CD4-positive, alpha-beta memory T cell (primary cell): ENCODE measurements at regions of chr18 and their contacts with region 1.

Region 1: DNA sequence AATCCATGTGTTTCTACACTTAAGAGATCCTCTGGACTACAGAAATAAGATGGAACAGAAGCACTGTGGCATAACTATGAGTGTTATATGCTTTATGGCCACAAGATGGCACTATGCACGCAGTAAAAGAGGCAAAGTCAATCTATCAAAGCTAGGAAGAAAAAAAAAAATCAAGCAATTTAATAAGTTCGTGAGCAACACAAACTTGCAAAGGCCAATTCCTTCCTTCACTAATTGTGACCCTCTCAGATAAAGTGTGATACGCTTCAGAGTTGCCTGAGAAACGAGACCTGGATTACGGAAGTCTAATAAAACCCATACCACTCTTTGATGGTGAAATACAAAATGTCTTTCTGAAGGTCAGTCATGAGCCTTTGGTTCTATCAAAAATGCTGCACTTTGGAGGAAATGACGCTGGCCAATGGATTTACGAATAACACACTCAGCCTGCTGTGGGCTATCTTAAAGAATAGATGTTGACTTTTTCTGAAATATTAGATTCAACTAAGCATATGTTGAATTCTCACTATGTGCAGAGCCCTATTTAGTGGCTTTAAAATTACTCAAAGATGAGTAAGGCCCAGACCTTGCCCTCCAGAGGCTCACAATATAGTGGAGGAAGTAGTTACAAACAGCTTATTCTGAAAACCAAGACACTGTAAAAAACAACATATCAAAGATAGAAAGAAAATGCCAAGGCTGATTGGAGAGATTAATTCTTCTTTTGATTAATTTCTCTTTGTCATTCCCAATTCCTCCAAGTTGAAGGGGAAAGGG is 35.5 kb upstream of the TTR start:
- DNase-seq: peak; percentile 41 to 51 (median 44)
- H3K4me3 ChIP-seq: no peak overlapping the region
- H3K4me3 Mint-ChIP-seq: peak overlapping the region in 1 of 8 donors; percentile 35
- H3K27ac ChIP-seq: no peak overlapping the region
- H3K27ac Mint-ChIP-seq: no peak overlapping the region
- H3K4me1 ChIP-seq: no peaks in the 10 kb centered on the region
- H3K4me1 Mint-ChIP-seq: peaks cover 0 to 2% (median 1%) of the 10 kb centered on the region in 4 donors
- H3K27me3 ChIP-seq: no peaks in the 10 kb centered on the region
- H3K27me3 Mint-ChIP-seq: peaks cover 11 to 12% of the 10 kb centered on the region in 2 donors

Region 2: GRCh38 chr18:31695989-31696388 is 139.8 kb after region 1 on chr18:
- CTCF ChIA-PET with region 1: no interaction called
- POLR2A ChIA-PET with region 1: no interaction called
- intact Hi-C with region 1: no loop called
- DNase-seq: no peak
- H3K4me3 ChIP-seq: no peak overlapping the region
- H3K4me3 Mint-ChIP-seq: no peak overlapping the region
- H3K27ac ChIP-seq: no peak overlapping the region
- H3K27ac Mint-ChIP-seq: no peak overlapping the region
- H3K4me1 ChIP-seq: no peaks in the 10 kb centered on the region
- H3K4me1 Mint-ChIP-seq: peaks cover 0 to 2% (median 0%) of the 10 kb centered on the region in 4 donors
- H3K27me3 ChIP-seq: no peaks in the 10 kb centered on the region
- H3K27me3 Mint-ChIP-seq: no peaks in the 10 kb centered on the region

Region 3: DNA sequence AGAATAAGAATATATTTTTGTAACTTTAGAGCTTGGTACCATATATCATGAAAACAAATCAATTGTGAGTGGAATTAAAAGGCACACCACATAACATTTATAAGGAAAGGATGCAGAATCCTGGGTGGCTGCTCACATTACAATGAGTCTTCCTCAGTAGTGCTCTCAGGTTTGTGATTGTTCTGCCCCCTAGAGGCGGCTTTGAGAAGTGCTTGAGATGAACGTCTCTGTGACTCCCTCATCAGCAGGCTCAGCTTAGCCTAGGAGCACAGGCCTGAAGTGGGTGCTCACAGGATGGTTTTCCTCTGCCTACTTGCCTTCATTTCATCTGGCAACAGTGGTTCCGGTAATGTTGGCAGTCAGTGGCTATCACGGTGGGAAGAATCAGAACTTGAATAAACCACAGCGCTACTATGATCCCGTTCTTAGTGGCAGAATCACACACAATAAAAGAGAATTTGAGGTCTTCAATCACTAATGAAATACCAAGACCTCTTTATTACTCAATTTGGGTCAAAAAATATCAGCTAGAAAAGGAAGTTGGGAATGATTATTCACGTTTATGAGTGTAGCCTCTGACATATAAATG is 166.3 kb after region 1 on chr18:
- CTCF ChIA-PET with region 1: interaction called, 48 read pairs
- POLR2A ChIA-PET with region 1: no interaction called
- intact Hi-C with region 1: no loop called
- DNase-seq: peak; percentile 43 to 61 (median 53)
- H3K4me3 ChIP-seq: no peak overlapping the region
- H3K4me3 Mint-ChIP-seq: no peak overlapping the region
- H3K27ac ChIP-seq: no peak overlapping the region
- H3K27ac Mint-ChIP-seq: no peak overlapping the region
- H3K4me1 ChIP-seq: no peaks in the 10 kb centered on the region
- H3K4me1 Mint-ChIP-seq: peaks cover 0 to 5% (median 0%) of the 10 kb centered on the region in 4 donors
- H3K27me3 ChIP-seq: peaks cover 10% of the 10 kb centered on the region
- H3K27me3 Mint-ChIP-seq: peaks cover 19 to 20% of the 10 kb centered on the region in 2 donors

Region 4: DNA sequence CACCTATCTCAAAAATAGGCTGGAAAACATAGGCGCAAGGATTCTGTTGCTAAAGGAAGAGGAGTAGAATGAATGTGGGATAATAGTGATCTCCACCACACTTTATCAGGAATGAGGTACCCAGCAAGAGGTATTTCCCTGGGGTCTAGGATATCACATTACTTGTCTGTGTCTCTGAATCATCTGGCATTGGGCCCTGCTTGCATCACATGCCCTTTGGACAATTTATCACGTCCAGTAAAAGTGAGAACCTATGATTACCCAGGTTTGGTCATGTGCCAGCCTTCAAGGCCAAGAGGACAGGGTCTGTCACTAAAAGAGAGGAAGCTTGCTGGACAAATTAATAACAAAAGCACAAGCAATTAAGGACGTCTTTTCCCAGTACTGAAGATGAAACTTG is 398.2 kb after region 1 on chr18:
- CTCF ChIA-PET with region 1: no interaction called
- POLR2A ChIA-PET with region 1: no interaction called
- intact Hi-C with region 1: loop called (anchors 2 kb)
- DNase-seq: no peak
- H3K4me3 ChIP-seq: no peak overlapping the region
- H3K4me3 Mint-ChIP-seq: no peak overlapping the region
- H3K27ac ChIP-seq: no peak overlapping the region
- H3K27ac Mint-ChIP-seq: no peak overlapping the region
- H3K4me1 ChIP-seq: no peaks in the 10 kb centered on the region
- H3K4me1 Mint-ChIP-seq: peaks cover 0 to 1% (median 0%) of the 10 kb centered on the region in 4 donors
- H3K27me3 ChIP-seq: no peaks in the 10 kb centered on the region
- H3K27me3 Mint-ChIP-seq: peaks cover 2 to 6% of the 10 kb centered on the region in 2 donors

Region 5: GRCh38 chr18:31977270-31977872 is 421.2 kb after region 1 on chr18:
- CTCF ChIA-PET with region 1: no interaction called
- POLR2A ChIA-PET with region 1: no interaction called
- intact Hi-C with region 1: loop called (anchors 5 kb)
- DNase-seq: peak in 4 of 5 donors; percentile 41 to 49 (median 46)
- H3K4me3 ChIP-seq: no peak overlapping the region
- H3K4me3 Mint-ChIP-seq: no peak overlapping the region
- H3K27ac ChIP-seq: no peak overlapping the region
- H3K27ac Mint-ChIP-seq: no peak overlapping the region
- H3K4me1 ChIP-seq: no peaks in the 10 kb centered on the region
- H3K4me1 Mint-ChIP-seq: peaks cover 2 to 9% (median 4%) of the 10 kb centered on the region in 4 donors
- H3K27me3 ChIP-seq: no peaks in the 10 kb centered on the region
- H3K27me3 Mint-ChIP-seq: no peaks in the 10 kb centered on the region

Region 6: DNA sequence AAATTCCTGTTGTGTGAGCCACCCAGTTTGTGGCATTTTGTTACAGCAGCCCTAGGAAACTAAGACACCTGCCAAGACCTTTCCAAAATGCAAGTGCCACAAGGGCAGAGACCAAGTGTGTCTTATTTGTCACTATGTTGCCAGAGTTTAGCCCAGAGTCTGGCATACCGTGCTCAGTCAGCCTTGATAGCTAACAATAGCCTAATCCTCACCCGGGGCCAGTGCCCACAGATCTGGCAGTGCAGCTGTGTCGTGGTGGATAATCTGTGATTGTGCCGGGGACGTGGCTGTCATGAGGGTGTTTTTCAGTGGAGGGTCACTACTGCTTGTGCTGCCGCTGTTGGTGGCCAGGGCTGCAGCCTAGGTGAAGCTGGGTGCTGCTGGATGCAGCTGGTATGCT is 687.2 kb after region 1 on chr18:
- CTCF ChIA-PET with region 1: no interaction called
- POLR2A ChIA-PET with region 1: no interaction called
- intact Hi-C with region 1: no loop called
- DNase-seq: no peak
- H3K4me3 ChIP-seq: no peak overlapping the region
- H3K4me3 Mint-ChIP-seq: no peak overlapping the region
- H3K27ac ChIP-seq: no peak overlapping the region
- H3K27ac Mint-ChIP-seq: no peak overlapping the region
- H3K4me1 ChIP-seq: no peaks in the 10 kb centered on the region
- H3K4me1 Mint-ChIP-seq: no peaks in the 10 kb centered on the region
- H3K27me3 ChIP-seq: no peaks in the 10 kb centered on the region
- H3K27me3 Mint-ChIP-seq: peaks cover 2 to 9% of the 10 kb centered on the region in 2 donors